ENCODE measurements at regions of chr12 and their contacts with region 1.

Region 1: DNA sequence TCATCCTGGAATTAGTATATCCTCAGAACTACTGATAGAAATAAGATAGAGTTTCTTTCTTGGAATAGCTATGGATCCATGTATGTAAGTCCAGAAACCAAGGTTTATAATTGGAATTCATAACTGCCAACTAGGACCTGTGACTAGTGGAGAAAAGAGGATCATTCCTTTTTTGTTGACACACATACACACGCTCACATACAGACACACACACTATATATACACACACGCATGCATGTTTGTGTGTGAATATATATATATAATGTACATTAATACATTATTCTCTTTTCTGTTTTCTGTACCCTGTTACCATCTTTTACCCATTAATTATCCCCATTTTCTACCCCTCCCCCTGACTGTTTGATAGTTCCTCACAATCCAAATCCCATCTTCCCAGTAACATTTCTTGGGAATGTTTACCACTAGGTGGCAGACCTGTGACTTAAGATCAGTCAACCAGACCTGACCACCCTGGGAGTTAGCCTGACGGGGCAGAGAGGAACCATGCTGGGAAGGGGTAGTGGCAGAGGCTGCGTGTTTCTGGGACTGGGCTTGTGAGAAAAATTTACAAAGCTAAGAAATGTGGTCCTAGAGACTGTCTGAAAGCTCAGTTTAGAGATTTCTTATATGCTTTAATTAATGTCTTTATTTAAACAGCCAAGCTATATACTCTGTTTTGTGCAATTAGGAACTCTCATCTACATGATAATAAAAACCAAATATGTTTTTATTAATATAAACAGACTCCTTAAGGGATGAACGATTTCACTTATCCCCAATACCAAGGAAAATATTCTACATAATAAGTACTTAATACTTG is 308.0 kb downstream of the PPFIA2 start:
- DNase-seq: peak in 5 of 10 donors; percentile 17 to 80 (median 38)

Region 2: DNA sequence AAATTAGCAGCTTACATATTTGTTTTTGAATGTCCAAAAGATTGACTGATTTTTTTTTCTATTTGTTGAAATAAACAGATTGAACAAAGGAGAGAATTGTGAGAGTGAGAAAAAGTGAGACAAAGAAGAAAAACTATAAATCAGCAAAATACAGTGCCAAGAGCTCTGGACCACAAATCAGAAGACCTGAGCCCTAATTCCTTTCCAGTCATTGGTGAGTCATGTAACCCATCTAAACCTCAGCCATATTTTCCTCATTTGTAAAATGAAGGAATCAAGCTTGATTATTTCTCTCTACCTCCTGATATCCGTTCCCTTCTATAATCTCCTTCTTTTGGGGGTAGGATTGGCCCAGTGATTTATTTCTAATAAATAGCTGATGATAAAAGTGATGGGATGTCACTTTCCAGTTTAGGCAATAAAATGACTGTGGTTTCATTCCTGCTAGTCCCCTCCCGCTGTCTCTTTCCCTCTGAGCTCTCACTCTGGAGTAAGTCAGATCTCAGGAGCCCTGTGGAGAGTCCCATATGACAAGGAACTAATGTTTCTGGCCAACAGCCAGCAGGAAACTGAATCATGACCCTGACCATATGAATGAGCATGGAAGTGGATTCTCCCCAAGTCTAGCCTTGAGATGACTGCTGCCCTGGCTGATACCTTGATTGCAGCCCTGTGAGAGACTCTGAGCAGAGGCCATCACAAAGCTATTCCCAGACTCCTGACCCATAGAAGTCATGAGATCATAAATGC is 154.4 kb before region 1 on chr12:
- intact Hi-C with region 1: no loop called
- DNase-seq: no peak

Region 3: DNA sequence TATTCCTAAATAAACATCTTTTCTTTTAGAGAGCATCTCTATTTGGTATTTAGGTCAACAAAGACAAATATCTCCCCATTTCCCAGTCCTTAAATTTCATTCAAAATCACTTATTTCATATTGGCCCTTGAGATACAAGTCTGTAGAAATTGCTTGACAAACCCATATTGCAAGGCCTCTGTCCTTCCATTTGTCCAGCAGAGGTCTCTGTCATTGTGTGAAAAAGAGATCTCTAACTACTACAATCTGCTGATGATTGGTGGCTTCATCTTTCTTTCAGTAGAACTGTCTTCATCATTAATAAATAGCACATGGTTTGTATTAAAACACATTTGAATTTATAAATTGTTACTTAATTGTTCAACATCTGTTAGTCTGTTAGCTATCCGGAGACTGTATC is 120.7 kb before region 1 on chr12:
- intact Hi-C with region 1: loop called (anchors 10 kb)
- DNase-seq: no peak

Region 4: GRCh38 chr12:81627336-81628189 is 176.4 kb after region 1 on chr12:
- intact Hi-C with region 1: loop called (anchors 2 kb)
- DNase-seq: no peak

Region 5: GRCh38 chr12:81644503-81644902 is 193.4 kb after region 1 on chr12:
- intact Hi-C with region 1: no loop called
- DNase-seq: no peak